CD8-positive, alpha-beta memory T cell (primary cell): ENCODE measurements at regions of chr15 and their contacts with region 1.

Region 1: DNA sequence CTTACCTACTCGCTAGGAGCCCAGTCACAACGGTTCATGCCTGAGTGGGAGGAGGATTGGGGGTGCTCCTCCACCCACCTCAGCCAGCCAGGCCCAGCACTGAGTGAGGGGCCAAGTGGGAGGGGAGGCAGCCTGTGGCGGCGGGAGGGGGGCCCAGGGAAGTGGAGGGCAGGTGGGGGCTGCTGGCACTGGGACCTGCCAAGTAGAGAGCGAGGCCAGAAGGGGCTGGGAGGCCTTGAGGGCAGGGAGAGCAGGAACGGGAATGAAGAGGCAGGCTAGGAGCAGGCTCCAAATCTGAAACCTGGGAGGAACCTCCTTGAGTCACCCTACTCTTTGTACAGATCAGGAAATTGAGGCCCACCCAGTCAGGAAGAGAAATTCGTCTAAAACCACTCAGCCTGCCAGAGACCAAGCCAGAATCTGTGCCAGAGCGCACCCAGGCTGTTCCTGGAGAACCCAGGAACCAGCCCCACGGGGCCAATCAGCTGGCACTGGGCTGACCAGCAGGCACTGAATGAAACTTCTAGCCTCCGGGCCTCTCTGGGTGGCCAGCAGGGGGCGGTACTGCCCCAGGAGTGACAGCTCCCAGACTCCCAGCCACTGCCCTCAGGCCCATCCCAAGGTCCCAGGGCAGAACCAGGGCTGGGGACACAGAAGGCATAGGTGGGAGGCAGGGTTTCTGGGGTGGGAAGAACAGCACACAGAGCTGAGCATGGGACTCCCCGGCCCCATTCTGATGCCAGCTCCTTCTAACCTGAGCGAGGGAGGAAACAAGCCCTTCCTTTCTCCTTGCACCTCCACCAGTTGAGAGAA is 14.8 kb upstream of the CYP11A1 start:
- DNase-seq: peak; percentile 67 to 83 (median 74)
- H3K4me3 ChIP-seq: no peak overlapping the region
- H3K4me3 Mint-ChIP-seq: no peak overlapping the region
- H3K27ac ChIP-seq: no peak overlapping the region
- H3K27ac Mint-ChIP-seq: peak overlapping the region in 6 of 8 donors; percentile 4 to 87 (median 66)
- H3K4me1 ChIP-seq: peaks cover 36% of the 10 kb centered on the region
- H3K4me1 Mint-ChIP-seq: peaks cover 23 to 37% (median 26%) of the 10 kb centered on the region in 3 donors
- H3K27me3 ChIP-seq: no peaks in the 10 kb centered on the region
- H3K27me3 Mint-ChIP-seq: peaks cover 0 to 3% of the 10 kb centered on the region in 2 donors

Region 2: GRCh38 chr15:74275957-74276356 is 106.3 kb before region 1 on chr15:
- CTCF ChIA-PET with region 1: no interaction called
- POLR2A ChIA-PET with region 1: no interaction called
- DNase-seq: no peak
- H3K4me3 ChIP-seq: no peak overlapping the region
- H3K4me3 Mint-ChIP-seq: no peak overlapping the region
- H3K27ac ChIP-seq: no peak overlapping the region
- H3K27ac Mint-ChIP-seq: no peak overlapping the region
- H3K4me1 ChIP-seq: no peaks in the 10 kb centered on the region
- H3K4me1 Mint-ChIP-seq: no peaks in the 10 kb centered on the region
- H3K27me3 ChIP-seq: no peaks in the 10 kb centered on the region
- H3K27me3 Mint-ChIP-seq: peaks cover 21 to 47% of the 10 kb centered on the region in 2 donors

Region 3: DNA sequence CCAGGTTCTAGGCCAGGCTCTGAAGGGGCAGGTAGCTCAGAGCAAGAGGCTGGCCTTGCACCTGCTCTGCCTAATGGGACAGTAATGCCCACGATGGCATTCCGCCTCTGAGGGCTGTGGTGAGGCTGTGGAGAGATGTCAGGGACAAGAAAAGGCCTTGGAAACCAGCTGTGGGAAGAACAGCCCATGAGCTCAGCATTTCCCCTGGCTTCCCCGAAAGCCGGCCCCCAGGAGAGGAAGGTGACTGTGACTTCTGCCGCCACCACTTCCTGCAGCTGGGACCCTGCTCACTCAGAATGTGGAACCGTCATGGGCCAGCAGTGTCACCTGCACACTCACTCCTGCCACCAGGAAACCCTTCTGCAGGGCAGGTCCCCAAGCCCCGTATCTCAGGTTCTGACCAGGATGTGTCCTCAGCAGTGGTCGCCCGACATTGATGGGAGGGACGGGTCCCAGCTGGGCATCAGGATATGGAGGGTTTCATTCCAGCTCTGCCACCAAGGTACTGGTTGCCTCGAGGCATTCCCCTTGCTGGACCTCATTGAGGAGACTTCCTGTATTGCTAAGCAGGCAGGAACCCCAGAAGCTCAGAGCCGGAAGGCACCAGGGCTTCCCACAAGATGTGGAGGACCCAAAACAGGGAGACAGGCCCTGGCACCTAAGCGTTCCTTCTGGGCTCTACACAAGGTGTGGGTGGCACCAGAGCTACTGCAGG is 20.8 kb after region 1 on chr15:
- CTCF ChIA-PET with region 1: interaction called, 35 read pairs
- POLR2A ChIA-PET with region 1: interaction called, 9 read pairs
- DNase-seq: peak; percentile 30 to 73 (median 46)
- H3K4me3 ChIP-seq: peak overlapping the region; percentile 11
- H3K4me3 Mint-ChIP-seq: peak overlapping the region in 6 of 7 donors; percentile 12 to 78 (median 64)
- H3K27ac ChIP-seq: peak overlapping the region; percentile 39
- H3K27ac Mint-ChIP-seq: peak overlapping the region; percentile 61 to 96 (median 81)
- H3K4me1 ChIP-seq: peaks cover 51% of the 10 kb centered on the region
- H3K4me1 Mint-ChIP-seq: peaks cover 69 to 76% (median 71%) of the 10 kb centered on the region in 3 donors
- H3K27me3 ChIP-seq: no peaks in the 10 kb centered on the region
- H3K27me3 Mint-ChIP-seq: peaks cover 0 to 1% of the 10 kb centered on the region in 2 donors

Region 4: GRCh38 chr15:74411691-74412558 is 29.7 kb after region 1 on chr15:
- CTCF ChIA-PET with region 1: interaction called, 13 read pairs
- POLR2A ChIA-PET with region 1: no interaction called
- DNase-seq: no peak
- H3K4me3 ChIP-seq: no peak overlapping the region
- H3K4me3 Mint-ChIP-seq: no peak overlapping the region
- H3K27ac ChIP-seq: no peak overlapping the region
- H3K27ac Mint-ChIP-seq: peak overlapping the region in 3 of 8 donors; percentile 31 to 55 (median 36)
- H3K4me1 ChIP-seq: no peaks in the 10 kb centered on the region
- H3K4me1 Mint-ChIP-seq: peaks cover 10 to 19% (median 10%) of the 10 kb centered on the region in 3 donors
- H3K27me3 ChIP-seq: no peaks in the 10 kb centered on the region
- H3K27me3 Mint-ChIP-seq: peaks cover 0 to 3% of the 10 kb centered on the region in 2 donors

Region 5: DNA sequence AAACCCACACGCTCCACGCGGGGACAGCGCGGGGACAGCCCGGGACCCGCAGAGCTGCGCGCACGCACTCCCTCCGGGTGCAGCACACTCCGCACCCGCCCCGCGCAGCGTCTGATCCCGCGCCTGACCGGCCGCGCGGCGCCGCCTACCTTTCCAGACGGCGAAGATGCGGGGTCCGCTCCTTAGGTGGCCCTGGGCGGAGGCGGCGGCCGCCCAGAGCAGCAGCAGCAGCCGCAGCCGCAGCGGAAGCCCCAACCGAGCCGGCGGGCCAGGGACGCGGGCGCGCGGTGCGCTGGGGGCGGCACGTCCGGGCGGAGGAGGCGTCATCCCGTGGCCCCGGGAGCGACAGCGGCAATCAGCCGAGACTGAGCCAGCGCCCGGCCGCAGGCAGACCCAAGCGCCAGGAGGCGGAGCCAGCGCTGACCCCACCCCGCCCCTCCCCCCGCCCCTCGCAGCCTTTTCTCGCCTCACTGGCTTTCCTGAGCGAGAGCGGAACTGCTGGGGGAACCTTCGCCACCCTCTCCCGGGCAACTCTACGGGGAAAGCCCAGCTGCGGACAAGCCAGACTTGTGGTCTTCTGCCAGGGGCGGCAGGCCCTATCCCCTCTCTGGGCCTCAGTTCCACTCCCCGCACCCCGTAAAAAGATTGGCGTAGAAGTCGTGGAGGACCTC is 51.5 kb after region 1 on chr15 and contains the start of gene SEMA7A:
- CTCF ChIA-PET with region 1: interaction called, 163 read pairs
- POLR2A ChIA-PET with region 1: interaction called, 5 read pairs
- DNase-seq: peak; percentile 60 to 86 (median 74)
- H3K4me3 ChIP-seq: peak within 1 kb of the TSS; percentile 58
- H3K4me3 Mint-ChIP-seq: peak within 1 kb of the TSS; percentile 84 to 93 (median 87)
- H3K27ac ChIP-seq: peak within 1 kb of the TSS; percentile 77
- H3K27ac Mint-ChIP-seq: peak within 1 kb of the TSS; percentile 84 to 98 (median 91)
- H3K4me1 ChIP-seq: peaks cover 19% of the 10 kb centered on the region
- H3K4me1 Mint-ChIP-seq: peaks cover 48 to 63% (median 51%) of the 10 kb centered on the region in 3 donors
- H3K27me3 ChIP-seq: no peaks in the 10 kb centered on the region
- H3K27me3 Mint-ChIP-seq: peaks cover 0 to 1% of the 10 kb centered on the region in 2 donors
- total RNA-seq, gene SEMA7A: 71.2 to 72.5 TPM

Region 6: GRCh38 chr15:74460871-74461846 is 78.9 kb after region 1 on chr15 and contains the start of gene UBL7:
- CTCF ChIA-PET with region 1: interaction called, 10 read pairs
- POLR2A ChIA-PET with region 1: no interaction called
- DNase-seq: peak; percentile 88 to 96 (median 94)
- H3K4me3 ChIP-seq: peak within 1 kb of the TSS; percentile 87
- H3K4me3 Mint-ChIP-seq: peak within 1 kb of the TSS; percentile 91 to 96 (median 94)
- H3K27ac ChIP-seq: peak within 1 kb of the TSS; percentile 81
- H3K27ac Mint-ChIP-seq: peak within 1 kb of the TSS; percentile 76 to 98 (median 88)
- H3K4me1 ChIP-seq: peaks cover 17% of the 10 kb centered on the region
- H3K4me1 Mint-ChIP-seq: peaks cover 42 to 69% (median 62%) of the 10 kb centered on the region in 3 donors
- H3K27me3 ChIP-seq: no peaks in the 10 kb centered on the region
- H3K27me3 Mint-ChIP-seq: no peaks in the 10 kb centered on the region
- total RNA-seq, gene UBL7: 64.9 to 67.7 TPM